ENCODE measurements at regions of chr17 and their contacts with region 1.

Region 1: GRCh38 chr17:4293572-4293971 is 29.8 kb upstream of the ANKFY1 start:
- DNase-seq: no peak
- H3K4me3 ChIP-seq: no peak overlapping the region
- H3K27me3 ChIP-seq: no peaks in the 10 kb centered on the region
- CTCF ChIP-seq: no peak

Region 2: GRCh38 chr17:4276511-4276910 is 17.1 kb before region 1 on chr17:
- CTCF ChIA-PET with region 1: no interaction called
- POLR2A ChIA-PET with region 1: no interaction called
- DNase-seq: no peak
- H3K4me3 ChIP-seq: no peak overlapping the region
- H3K27me3 ChIP-seq: no peaks in the 10 kb centered on the region
- CTCF ChIP-seq: no peak

Region 3: GRCh38 chr17:4304417-4305027 is 10.9 kb after region 1 on chr17:
- CTCF ChIA-PET with region 1: interaction called, 21 read pairs
- POLR2A ChIA-PET with region 1: no interaction called
- DNase-seq: no peak
- H3K4me3 ChIP-seq: no peak overlapping the region
- H3K27me3 ChIP-seq: no peaks in the 10 kb centered on the region
- CTCF ChIP-seq: peak; percentile 80